SK-N-SH (cell line): ENCODE measurements at regions of chr4 and their contacts with region 1.

Region 1: GRCh38 chr4:72546456-72546855 is 22.6 kb downstream of the ADAMTS3 start:
- DNase-seq: no peak
- H3K4me3 ChIP-seq: no peak overlapping the region
- H3K27ac ChIP-seq: no peak overlapping the region
- H3K4me1 ChIP-seq: no peaks in the 10 kb centered on the region
- H3K27me3 ChIP-seq: no peaks in the 10 kb centered on the region
- CTCF ChIP-seq: no peak
- EP300 ChIP-seq: no peak
- RAD21 ChIP-seq: no peak

Region 2: DNA sequence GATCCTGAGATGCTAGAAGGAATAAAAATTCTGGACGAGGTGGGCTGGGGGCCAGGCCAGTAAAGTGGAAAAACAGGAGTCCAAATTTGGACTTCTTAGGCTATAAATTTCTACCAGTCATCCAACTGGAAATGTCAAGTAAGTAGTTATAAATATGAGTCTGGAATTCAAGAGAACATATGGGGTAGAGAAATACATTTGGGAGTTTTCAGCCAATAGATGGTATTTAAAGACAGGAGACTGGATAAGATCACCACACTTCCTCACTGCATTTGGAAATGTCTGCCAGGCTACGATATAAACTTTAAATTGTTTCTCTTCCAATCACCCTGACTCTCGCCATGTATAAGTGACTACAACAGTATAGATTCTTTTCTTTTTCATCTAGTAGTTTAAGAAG is 272.2 kb before region 1 on chr4:
- CTCF ChIA-PET with region 1: no interaction called
- POLR2A ChIA-PET with region 1: no interaction called
- DNase-seq: no peak
- H3K4me3 ChIP-seq: no peak overlapping the region
- H3K27ac ChIP-seq: no peak overlapping the region
- H3K4me1 ChIP-seq: no peaks in the 10 kb centered on the region
- H3K27me3 ChIP-seq: no peaks in the 10 kb centered on the region
- CTCF ChIP-seq: no peak
- EP300 ChIP-seq: no peak
- RAD21 ChIP-seq: no peak

Region 3: GRCh38 chr4:72567821-72568675 is 21.6 kb after region 1 on chr4:
- CTCF ChIA-PET with region 1: interaction called, 10 read pairs
- POLR2A ChIA-PET with region 1: no interaction called
- DNase-seq: peak; percentile 69
- H3K4me3 ChIP-seq: peak overlapping the region; percentile 76 to 81
- H3K27ac ChIP-seq: peak overlapping the region; percentile 27 to 83; a peak in 3 of 4 replicates
- H3K4me1 ChIP-seq: peaks cover 0 to 4% of the 10 kb centered on the region in 2 experiments; a peak in 2 of 4 replicates
- H3K27me3 ChIP-seq: no peaks in the 10 kb centered on the region; the same call in 1 of the 2 replicates
- CTCF ChIP-seq: peak; percentile 51
- EP300 ChIP-seq: no peak
- RAD21 ChIP-seq: no peak